ENCODE measurements at regions of chr7 and their contacts with region 1.

Region 1: DNA sequence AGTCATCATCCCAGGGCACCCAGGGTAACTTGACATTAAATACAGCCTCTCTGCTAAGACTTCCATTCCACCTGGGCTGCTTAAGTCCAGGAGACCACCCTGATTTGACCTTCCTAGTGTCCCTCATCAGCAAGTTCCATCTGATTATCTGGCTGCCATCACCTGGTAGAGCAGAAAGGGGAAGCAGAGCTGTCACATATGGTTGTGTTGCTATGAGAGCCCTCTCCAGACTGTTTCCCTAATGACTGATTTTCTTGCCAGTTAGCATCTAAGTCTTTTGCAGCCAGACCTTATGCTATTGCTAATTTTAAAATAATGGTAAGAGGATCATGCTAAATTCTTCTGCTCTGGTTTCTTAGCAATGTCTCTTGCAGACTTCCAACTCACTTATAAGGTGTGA is 38.7 kb downstream of the KCNH2 start:
- DNase-seq: no peak
- ATAC-seq: no peak
- H3K4me3 ChIP-seq: no peak overlapping the region
- H3K27ac ChIP-seq: no peak overlapping the region
- H3K4me1 ChIP-seq: peaks cover 18% of the 10 kb centered on the region
- H3K27me3 ChIP-seq: no peaks in the 10 kb centered on the region
- CTCF ChIP-seq: no peak

Region 2: GRCh38 chr7:151085691-151086620 is 146.5 kb after region 1 on chr7 and contains the start of gene AGAP3:
- CTCF ChIA-PET with region 1: interaction called, 10 read pairs
- POLR2A ChIA-PET with region 1: no interaction called
- intact Hi-C with region 1: no loop called
- DNase-seq: peak; percentile 71
- ATAC-seq: peak; percentile 44
- H3K4me3 ChIP-seq: peak within 1 kb of the TSS; percentile 99
- H3K27ac ChIP-seq: peak within 1 kb of the TSS; percentile 42
- H3K4me1 ChIP-seq: peaks cover 54% of the 10 kb centered on the region
- H3K27me3 ChIP-seq: no peaks in the 10 kb centered on the region
- CTCF ChIP-seq: no peak
- total RNA-seq, gene AGAP3: 53.5 and 88.2 TPM in 2 replicates